ENCODE measurements at regions of chr13 and their contacts with region 1.

Region 1: DNA sequence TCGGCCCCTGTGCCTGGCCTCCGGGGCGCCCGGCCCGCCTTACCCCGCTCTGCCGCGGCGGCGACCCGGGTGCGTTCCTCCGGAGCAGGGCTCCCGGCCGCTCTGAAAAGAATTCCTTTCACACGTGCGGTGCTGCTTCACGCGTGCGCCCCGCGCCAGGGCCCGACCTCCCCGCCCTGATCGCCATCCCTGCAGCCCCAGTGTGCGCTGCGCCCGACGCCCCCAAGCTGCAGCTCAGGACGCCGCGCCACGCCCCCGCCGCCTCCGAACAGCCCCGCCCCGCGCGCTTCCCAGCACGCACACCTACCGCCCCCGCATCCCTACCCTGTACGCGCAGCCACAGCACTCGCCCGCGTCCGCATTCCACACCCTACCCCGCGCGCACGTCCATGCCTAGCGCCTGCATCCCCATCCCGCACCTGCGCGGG is at the start of gene GJA3:
- DNase-seq: no peak
- total RNA-seq, gene GJA3: not detected

Region 2: DNA sequence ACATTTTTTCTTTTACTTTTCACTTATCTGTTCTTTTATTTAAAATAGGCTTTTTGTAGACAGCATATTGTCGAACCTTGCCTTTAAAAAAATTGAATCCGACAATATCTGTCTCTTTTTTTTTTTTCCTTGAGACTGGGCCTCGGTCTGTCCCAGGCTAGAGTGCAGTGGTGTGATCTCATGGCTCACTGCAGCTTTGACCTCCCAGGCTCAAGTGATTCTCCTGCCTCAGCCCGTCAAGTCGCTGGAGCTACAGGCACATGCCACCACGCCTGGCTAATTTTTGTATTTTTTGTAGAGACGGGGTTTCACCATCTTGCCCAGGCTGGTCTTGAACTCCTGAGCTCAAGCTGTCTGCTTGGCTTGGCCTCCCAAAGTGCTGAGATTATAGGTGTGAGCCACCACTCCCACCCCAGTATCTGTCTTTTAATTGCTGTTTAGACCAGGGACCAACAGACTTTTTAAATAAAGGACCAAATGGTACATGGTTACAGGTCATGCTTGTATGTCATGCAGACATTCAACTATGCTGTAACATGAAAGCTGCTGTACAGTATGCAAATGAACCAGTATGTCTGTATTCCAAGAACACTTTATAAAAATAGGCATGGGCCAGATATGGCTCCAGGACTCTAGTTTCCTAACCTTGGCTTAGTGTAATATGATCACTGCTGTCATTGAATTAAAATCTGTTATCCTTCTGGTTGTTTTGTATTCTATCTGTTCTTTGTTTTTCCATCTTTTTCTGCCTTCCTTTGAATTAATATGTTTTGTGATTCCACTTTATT is 80.3 kb before region 1 on chr13:
- intact Hi-C with region 1: loop called in 1 of 2 experiments (anchors 10 kb)
- DNase-seq: no peak

Region 3: DNA sequence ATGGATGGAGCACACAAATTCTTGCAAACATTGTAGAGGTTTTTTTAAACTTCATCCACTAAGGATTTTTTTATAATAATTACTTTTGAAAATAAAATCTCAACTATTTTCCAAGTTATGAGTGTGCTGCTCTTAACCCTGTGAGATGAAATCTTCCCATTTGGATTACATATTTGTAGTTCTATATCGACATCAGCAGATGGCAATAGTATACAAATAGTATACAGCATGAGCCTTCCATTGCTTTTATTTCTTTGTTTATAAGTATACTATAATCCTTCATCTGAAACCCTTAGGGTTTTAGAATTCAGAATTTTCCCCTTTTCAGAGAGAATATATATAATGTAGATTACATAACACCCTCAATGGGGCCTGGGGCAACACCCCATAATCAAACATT is 70.5 kb before region 1 on chr13:
- intact Hi-C with region 1: loop called (anchors 10 kb)
- DNase-seq: no peak

Region 4: DNA sequence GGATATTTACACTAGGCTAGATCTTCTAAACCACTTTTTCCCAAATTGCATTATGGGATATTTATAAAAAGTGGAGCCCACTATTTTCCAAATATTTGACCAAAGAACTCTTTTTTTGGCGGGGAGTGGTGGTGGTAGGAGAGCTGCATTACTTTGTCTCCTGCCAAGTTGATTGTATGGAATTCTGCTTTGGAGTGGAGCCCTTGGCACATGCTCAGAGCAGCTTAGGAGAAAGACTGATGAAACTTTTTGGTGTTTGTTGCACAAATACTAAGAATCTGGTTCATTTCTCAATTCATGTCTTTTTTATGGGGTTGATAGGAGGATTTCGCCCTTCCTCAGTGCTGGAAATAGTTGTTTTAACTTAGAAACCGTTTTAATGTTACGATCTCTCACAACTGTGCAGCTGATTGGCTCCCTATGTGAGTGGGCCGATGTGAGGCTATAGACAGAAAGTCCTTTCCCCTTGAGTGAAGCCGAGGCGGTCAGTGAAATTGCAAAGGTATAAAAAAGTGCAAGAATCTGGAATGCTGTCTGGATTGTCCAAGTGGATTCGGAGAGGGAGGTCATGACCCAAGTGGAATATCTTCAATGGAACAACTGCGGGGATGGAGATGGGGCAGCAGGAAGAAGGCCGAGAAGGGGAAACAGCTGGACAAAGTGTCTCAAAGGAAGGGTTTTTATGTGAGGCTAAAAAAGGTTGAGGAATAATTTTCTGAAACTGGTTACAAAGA is 1925.9 kb after region 1 on chr13:
- intact Hi-C with region 1: no loop called
- DNase-seq: no peak